ENCODE measurements at regions of chr5 and their contacts with region 1.

Region 1: GRCh38 chr5:61162010-61162831 is at the start of gene SMIM15:
- DNase-seq: peak; percentile 81 to 85
- H3K4me3 ChIP-seq: peak within 1 kb of the TSS; percentile 95
- H3K27ac ChIP-seq: peak within 1 kb of the TSS; percentile 76
- H3K4me1 ChIP-seq: peaks cover 30% of the 10 kb centered on the region
- H3K27me3 ChIP-seq: no peaks in the 10 kb centered on the region
- CTCF ChIP-seq: no peak
- total RNA-seq, gene SMIM15: 50.6 and 58.2 TPM in 2 replicates

Region 2: GRCh38 chr5:61020415-61020814 is 141.8 kb before region 1 on chr5:
- CTCF ChIA-PET with region 1: no interaction called
- POLR2A ChIA-PET with region 1: no interaction called
- intact Hi-C with region 1: no loop called
- DNase-seq: no peak
- H3K4me3 ChIP-seq: no peak overlapping the region
- H3K27ac ChIP-seq: no peak overlapping the region
- H3K4me1 ChIP-seq: 0 out of 2 replicates have a peak, but pooled peaks cover 7% of the 10 kb centered on the region
- H3K27me3 ChIP-seq: no peaks in the 10 kb centered on the region
- CTCF ChIP-seq: no peak

Region 3: DNA sequence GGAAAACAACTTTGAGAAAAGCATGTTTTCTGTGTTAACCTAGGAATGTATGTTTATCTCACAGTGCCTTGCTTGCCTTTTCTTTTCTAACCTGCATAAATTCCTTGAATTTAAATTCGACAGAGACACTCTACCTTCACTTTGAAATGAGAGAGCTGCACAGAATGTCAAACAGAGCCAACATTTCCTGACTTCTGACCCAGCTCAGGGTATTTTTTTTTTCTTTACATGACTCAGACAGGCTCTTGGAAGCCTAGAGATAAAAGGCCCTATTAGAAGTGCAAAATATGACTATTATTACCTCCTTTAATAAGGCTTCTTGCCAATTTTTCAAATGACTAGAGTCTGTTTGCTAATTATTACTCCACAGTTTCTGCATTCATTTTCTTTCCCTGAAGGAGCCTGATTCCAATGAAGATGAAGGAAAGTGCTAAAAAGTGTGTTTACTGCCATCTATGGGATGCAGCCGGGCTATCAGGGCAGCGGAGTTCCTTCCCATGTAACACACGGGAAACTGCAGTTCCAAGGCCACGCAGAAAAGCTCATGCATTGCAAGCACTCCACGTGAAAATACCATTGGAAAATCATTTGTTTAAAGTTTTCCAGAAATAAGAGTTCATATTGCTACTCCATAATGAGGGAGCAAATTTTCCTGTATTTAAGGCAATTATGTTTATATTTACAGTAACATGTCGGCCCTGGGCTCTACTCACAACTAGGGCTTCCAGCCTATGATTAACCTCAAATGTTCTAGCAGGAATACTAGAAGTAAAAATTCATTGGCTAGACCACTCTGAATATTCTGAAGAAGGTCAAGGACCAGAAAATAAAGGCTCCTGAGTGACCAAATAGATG is 655.5 kb after region 1 on chr5:
- CTCF ChIA-PET with region 1: no interaction called
- POLR2A ChIA-PET with region 1: interaction called, 3 read pairs
- intact Hi-C with region 1: loop called (anchors 10 kb)
- DNase-seq: peak in 1 of 2 experiments; percentile 19
- H3K4me3 ChIP-seq: no peak overlapping the region
- H3K27ac ChIP-seq: no peak overlapping the region
- H3K4me1 ChIP-seq: no peaks in the 10 kb centered on the region
- H3K27me3 ChIP-seq: peaks cover 30% of the 10 kb centered on the region; the same call in 1 of the 2 replicates
- CTCF ChIP-seq: peak; percentile 57

Measured in PC-9 (cell line).